PC-3 (cell line): ENCODE measurements at regions of chr9 and their contacts with region 1.

Region 1: DNA sequence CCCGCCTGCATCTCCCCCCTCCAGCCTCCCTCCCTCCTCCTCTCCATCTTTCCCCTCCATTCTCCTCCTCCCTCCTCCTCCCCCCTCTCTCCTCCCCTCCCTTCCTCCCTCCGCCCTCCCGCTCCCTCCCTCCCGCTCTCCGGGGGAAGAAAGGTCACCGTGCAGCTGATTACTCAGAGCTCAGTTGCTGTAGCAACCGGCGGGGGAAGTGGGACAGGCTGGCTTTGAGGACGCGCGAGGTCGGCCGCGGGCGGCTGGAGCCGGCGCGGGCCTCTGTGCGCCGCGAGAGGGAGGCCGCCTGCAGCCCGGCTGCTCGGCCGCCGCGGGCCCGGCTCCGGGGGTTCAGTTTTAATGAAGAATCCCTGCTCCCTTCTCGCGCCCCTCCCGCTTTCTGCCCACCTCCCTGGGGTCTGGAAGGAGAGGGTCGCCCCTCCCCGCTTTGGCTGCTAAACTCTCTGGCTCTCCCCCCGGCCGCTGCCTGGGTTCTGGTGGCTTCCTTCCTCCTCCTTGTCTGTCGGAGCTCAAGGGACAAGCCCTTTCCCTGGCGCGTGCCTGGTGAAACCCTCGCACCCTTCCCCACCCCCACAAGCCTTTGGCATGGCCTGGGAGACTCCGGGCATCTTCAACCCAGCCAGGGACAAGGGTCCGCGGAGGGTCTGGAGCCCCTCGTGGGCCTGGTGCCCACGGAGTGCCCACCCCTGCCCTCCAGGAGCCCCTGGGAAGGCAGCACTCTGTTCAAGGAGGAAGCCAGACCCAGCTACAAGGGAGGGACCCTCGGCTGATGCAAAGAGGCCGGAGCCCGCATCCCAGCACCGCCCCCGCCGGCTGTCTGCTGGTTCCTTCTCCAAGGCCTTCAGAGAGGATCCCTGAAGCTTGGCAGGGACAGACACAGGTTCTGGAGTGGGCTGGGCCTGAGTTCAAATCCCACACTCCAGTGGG is 160.3 kb downstream of the C9orf50 start:
- DNase-seq: peak; percentile 91
- ATAC-seq: peak; percentile 95
- H3K4me3 ChIP-seq: peak overlapping the region; percentile 62
- H3K27ac ChIP-seq: peak overlapping the region; percentile 64
- H3K4me1 ChIP-seq: peaks cover 9% of the 10 kb centered on the region
- H3K27me3 ChIP-seq: no peaks in the 10 kb centered on the region
- CTCF ChIP-seq: no peak

Region 2: DNA sequence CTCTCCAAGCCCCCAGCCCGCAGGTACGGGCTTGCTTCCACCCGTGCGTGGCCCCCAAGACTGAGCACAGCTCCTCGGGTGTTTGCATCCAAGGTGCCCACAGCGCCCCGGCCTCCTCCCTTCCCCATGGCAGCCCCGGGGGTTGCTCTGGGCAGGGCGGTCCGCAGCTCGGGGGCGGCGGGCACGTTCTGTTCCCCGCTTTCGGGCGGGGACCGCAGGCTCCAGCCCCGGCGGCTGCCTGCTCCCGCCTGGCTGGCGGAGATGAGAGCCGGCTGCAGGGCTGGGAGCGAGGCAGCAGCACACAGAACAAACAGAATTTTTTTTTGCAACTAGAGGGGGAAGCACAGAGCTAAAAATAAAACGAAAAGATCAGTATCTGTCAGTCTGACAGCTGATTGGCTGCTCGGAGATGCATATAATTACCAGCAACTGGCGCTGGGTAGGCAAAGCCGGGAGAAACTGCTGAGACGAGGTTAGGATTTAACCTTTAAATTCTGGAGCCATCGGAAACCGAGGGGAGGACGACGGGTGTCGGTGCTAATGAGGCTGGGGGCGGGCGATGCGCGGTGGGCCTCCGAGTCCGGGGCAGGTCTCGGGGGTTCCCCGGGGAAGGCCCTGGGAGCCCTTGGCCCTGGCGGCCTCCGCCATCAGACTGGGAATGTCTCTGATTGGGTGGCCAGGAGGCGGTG is 139.9 kb before region 1 on chr9:
- CTCF ChIA-PET with region 1: interaction called, 10 read pairs
- POLR2A ChIA-PET with region 1: no interaction called
- intact Hi-C with region 1: no loop called
- DNase-seq: peak; percentile 61
- ATAC-seq: peak; percentile 86
- H3K4me3 ChIP-seq: peak overlapping the region; percentile 61
- H3K27ac ChIP-seq: no peak overlapping the region
- H3K4me1 ChIP-seq: peaks cover 5% of the 10 kb centered on the region
- H3K27me3 ChIP-seq: no peaks in the 10 kb centered on the region
- CTCF ChIP-seq: peak; percentile 18; the same call in 1 of the 2 replicates

Region 3: GRCh38 chr9:129390541-129390940 is 70.1 kb before region 1 on chr9:
- CTCF ChIA-PET with region 1: no interaction called
- POLR2A ChIA-PET with region 1: interaction called, 11 read pairs
- intact Hi-C with region 1: no loop called
- DNase-seq: no peak
- ATAC-seq: no peak
- H3K4me3 ChIP-seq: no peak overlapping the region
- H3K27ac ChIP-seq: no peak overlapping the region
- H3K4me1 ChIP-seq: no peaks in the 10 kb centered on the region
- H3K27me3 ChIP-seq: no peaks in the 10 kb centered on the region
- CTCF ChIP-seq: no peak

Region 4: DNA sequence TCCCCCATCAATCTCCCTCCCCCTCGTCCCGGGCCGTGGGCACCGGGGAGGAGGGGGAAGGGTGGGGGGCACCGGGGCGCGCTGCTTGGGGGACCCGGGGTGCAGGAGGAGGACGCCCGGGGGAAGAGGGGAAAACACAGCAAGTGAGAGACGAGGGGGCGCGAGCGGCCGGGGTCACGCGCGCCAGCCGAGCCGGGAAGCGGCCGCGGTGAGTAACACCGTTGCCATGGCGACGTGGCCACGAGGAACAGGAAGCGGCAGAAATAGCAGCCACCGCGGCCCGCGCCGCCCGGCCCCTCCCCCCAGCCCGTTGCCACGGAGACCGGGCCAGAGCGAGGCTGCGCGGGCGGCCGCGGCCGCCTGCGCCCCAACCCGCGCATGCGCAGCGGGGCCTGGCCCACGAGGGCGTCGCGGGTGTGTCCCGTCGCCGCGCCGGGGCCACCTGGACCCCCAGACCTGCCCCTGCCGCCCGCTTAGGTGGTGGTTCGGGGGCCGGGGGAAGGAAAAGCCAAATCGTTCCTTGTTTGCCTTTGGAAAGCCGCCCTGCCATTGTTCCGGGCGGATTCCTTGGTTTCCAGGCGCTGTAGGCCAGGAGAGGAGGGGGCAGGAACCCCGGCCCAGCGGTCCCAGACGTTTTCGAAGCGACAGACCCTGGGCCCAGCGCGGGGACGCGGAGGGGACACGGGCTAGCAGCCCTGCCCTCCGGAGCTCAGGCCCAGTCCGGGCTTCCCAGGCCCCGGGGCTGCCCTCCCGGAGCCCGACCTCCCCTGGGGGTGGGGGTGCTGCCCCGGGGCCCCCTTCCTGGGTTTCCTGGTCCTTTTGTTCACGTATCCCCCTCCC is 46.8 kb before region 1 on chr9:
- CTCF ChIA-PET with region 1: no interaction called
- POLR2A ChIA-PET with region 1: interaction called, 12 read pairs
- intact Hi-C with region 1: no loop called
- DNase-seq: peak; percentile 93
- ATAC-seq: peak; percentile 85
- H3K4me3 ChIP-seq: peak overlapping the region; percentile 64
- H3K27ac ChIP-seq: peak overlapping the region; percentile 93
- H3K4me1 ChIP-seq: peaks cover 18% of the 10 kb centered on the region
- H3K27me3 ChIP-seq: no peaks in the 10 kb centered on the region
- CTCF ChIP-seq: no peak

Region 5: GRCh38 chr9:129436751-129437625 is 23.6 kb before region 1 on chr9:
- CTCF ChIA-PET with region 1: no interaction called
- POLR2A ChIA-PET with region 1: interaction called, 14 read pairs
- intact Hi-C with region 1: no loop called
- DNase-seq: peak; percentile 21
- ATAC-seq: peak; percentile 46
- H3K4me3 ChIP-seq: peak overlapping the region; percentile 76
- H3K27ac ChIP-seq: no peak overlapping the region
- H3K4me1 ChIP-seq: peaks cover 7% of the 10 kb centered on the region
- H3K27me3 ChIP-seq: no peaks in the 10 kb centered on the region
- CTCF ChIP-seq: no peak

Region 6: GRCh38 chr9:129482521-129483414 is 22.2 kb after region 1 on chr9:
- CTCF ChIA-PET with region 1: no interaction called
- POLR2A ChIA-PET with region 1: interaction called, 13 read pairs
- intact Hi-C with region 1: no loop called
- DNase-seq: peak; percentile 84
- ATAC-seq: peak; percentile 72
- H3K4me3 ChIP-seq: peak overlapping the region; percentile 67
- H3K27ac ChIP-seq: peak overlapping the region; percentile 98
- H3K4me1 ChIP-seq: peaks cover 37% of the 10 kb centered on the region
- H3K27me3 ChIP-seq: no peaks in the 10 kb centered on the region
- CTCF ChIP-seq: no peak

Region 7: DNA sequence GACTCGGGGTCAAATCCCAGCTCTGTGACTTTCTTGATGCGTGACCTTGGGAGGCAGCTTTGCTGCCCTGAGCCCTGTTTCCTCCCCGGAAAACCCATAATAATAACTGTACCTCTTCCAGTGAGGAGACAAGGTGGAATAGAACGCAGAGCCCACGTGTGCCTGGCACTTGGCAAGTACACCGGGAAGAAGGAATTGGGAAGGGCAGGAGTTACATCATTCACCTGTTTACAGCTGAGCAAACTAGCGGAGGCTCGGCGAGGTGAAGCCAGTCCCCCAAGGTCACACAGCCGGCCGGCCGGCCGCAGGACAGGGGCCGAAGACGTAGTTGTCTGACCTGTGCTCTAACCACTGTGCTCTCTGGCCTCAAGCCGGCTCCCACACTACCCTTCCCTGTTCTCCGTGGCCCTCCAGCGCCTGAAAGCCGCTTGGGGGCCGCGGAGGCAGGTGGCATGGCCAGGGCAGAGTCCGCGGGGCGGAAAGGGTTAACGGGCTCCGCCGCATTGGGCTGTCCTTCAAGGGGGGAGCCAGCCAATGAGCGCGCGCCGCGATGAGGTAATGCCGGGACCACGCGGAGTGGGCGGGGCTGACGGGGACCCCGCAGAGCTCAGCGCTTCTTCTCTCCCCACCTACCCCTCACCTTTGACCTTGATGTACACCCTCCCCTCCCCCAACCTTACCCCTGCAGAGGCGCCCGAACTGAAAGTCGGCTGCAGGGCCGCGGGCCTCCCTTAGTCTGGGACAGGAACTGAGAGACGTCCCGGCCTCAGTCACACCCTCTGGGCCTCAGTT is 35.1 kb after region 1 on chr9:
- CTCF ChIA-PET with region 1: no interaction called
- POLR2A ChIA-PET with region 1: interaction called, 14 read pairs
- intact Hi-C with region 1: no loop called
- DNase-seq: peak; percentile 75
- ATAC-seq: peak; percentile 68
- H3K4me3 ChIP-seq: peak overlapping the region; percentile 70
- H3K27ac ChIP-seq: peak overlapping the region; percentile 62
- H3K4me1 ChIP-seq: peaks cover 25% of the 10 kb centered on the region
- H3K27me3 ChIP-seq: no peaks in the 10 kb centered on the region
- CTCF ChIP-seq: no peak